GM13976 (cell line): ENCODE measurements at regions of chr10 and their contacts with region 1.

Region 1: GRCh38 chr10:52313933-52314816 is at the start of gene DKK1:
- DNase-seq: peak; percentile 51
- CTCF ChIP-seq: peak; percentile 40

Region 2: DNA sequence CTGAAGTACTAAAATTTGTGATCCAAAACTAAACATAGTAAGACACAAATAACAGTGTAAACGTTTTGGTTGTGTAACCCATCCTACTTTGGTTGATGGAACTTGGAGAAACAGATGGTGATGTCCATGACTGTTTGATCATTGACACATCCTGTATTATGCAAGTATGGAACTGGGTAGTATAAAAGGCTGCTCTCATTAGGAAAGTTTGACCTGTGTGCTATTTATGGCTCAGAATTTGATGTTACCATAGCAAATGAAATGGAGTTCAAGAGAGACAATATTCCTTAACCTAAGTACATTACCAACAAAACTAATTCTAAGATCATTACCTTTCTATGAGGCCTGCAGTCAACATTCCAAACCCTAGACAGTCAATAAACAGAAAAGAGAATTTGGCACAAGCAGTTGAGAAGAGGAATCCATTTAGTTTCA is 39.8 kb after region 1 on chr10:
- in situ Hi-C with region 1: no loop called
- DNase-seq: no peak
- CTCF ChIP-seq: no peak

Region 3: DNA sequence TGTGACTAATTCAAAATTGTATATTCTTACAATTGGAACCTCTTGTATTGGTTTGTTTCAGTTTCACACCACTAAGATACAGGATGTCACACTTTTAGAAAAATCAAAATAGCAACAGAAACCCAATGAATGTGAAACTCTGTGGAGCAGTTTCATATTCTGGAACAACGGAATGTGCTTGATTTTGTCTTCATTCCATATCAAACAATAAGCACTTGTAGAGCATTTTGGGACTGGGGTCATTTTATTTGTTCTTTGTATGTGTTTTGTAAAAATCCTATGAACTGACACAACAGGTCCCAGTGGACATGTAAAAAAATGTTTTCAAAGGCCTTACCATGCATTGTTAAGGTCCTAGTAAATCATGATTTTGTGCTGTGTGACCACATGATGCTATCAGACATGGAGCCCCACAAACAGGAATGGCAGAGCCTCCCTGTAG is 123.1 kb after region 1 on chr10:
- in situ Hi-C with region 1: no loop called
- DNase-seq: peak; percentile 6
- CTCF ChIP-seq: no peak

Region 4: DNA sequence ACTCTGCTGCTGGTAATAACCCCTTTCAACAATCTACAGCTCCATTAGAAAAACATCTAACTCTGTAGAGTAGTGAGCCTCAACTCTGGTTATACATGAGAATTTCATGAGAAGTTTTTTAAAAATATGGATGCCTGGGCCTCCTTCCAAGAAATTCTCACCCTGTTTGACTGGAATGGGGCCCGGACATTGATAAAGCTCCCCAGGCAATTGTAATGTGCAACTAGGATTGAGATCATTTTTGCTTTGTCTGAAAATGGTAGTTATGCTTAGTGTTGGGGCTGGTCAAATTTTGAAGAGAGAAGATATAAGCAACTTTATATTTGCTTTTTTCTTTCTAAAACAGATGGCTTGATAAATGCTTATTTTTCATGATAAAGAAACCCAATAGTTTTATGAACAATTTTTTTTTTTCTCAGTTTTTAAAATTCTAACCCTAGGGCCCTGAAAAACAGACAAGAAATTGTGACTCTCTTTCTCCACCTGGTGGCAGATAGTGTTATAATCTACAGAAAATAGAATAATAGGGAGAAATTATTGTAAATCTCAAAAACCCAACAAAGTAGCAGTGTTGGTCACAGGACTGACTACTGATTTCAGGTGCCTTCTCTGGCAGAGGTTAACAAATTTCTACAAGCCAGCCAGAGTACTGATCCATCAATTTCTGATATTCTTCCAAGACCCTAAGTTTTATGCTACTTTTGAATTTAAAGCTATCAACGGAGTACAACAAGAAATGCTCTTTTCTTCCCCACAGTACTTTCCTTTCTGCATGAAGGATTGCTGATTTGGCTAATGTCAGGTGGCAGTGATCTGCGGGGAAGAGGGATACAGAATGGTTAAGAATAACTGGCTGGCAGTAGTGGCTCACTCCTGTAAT is 174.7 kb after region 1 on chr10:
- in situ Hi-C with region 1: loop called (anchors 10 kb)
- DNase-seq: peak; percentile 10
- CTCF ChIP-seq: no peak

Region 5: GRCh38 chr10:52499281-52499680 is 185.1 kb after region 1 on chr10:
- in situ Hi-C with region 1: no loop called
- DNase-seq: no peak
- CTCF ChIP-seq: no peak